GM12878 (cell line): ENCODE measurements at regions of chr16 and their contacts with region 1.

Region 1: GRCh38 chr16:76653390-76654026 is 376.3 kb downstream of the CNTNAP4 start:
- DNase-seq: peak; percentile 9
- ATAC-seq: peak; percentile 93
- H3K4me3 ChIP-seq: no peak overlapping the region
- H3K27ac ChIP-seq: no peak overlapping the region
- H3K4me1 ChIP-seq: no peaks in the 10 kb centered on the region
- H3K27me3 ChIP-seq: no peaks in the 10 kb centered on the region
- CTCF ChIP-seq: peak; percentile 53 to 78 (median 61); a peak in 5 of 6 replicates
- EP300 ChIP-seq: no peak
- POLR2A ChIP-seq: no peak
- RAD21 ChIP-seq: peak; percentile 82

Region 2: DNA sequence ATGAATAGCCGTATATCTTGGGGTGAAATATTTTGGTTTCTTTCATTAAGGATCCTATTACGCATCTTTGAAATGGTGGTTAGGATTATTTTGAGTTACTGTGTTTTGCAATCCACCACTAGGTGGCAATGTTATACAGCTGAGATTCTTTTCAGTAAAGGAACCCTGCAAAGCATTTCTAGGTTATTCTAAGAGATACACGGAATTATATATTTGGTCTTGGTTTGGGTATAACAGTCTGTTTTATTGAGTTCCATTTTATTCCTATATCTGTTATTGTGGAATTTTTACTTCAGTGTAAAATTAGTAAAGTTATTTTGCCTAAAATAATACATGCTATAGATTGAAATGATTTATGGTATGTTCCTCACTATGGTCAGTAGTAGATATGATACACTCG is 864.3 kb before region 1 on chr16:
- CTCF ChIA-PET with region 1: interaction called, 12 read pairs
- POLR2A ChIA-PET with region 1: no interaction called
- RAD21 ChIA-PET with region 1: interaction called, 4 read pairs
- SMC1A ChIA-PET with region 1: interaction called, 4 read pairs
- in situ Hi-C with region 1: loop called (anchors 5 kb)
- intact Hi-C with region 1: loop called (anchors 1 kb)
- DNase-seq: no peak
- ATAC-seq: peak; percentile 89
- H3K4me3 ChIP-seq: no peak overlapping the region
- H3K27ac ChIP-seq: no peak overlapping the region
- H3K4me1 ChIP-seq: 0 out of 2 replicates have a peak, but pooled peaks cover 3% of the 10 kb centered on the region
- H3K27me3 ChIP-seq: no peaks in the 10 kb centered on the region
- CTCF ChIP-seq: peak; percentile 60 to 74 (median 73)
- EP300 ChIP-seq: no peak
- POLR2A ChIP-seq: no peak
- RAD21 ChIP-seq: peak; percentile 90

Region 3: DNA sequence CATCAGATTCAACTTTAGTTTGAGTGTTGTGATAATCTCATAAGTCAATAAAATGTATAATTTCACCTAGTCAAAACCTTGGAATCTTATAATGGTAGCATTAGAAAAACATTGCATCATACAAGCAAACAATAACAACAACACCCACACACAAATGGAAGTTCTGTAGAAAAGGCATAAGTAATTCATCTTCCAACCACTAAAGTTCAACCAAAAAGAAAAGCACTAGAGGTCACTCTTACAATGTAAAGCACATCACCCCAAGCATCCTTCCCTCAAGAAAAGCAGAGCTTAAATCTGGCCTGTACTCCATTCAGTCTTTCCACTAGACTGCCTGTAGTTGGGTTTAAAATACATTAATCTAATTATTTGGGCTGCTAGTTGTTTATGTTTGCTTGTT is 374.5 kb before region 1 on chr16:
- CTCF ChIA-PET with region 1: interaction called, 17 read pairs
- POLR2A ChIA-PET with region 1: no interaction called
- RAD21 ChIA-PET with region 1: interaction called, 19 read pairs
- SMC1A ChIA-PET with region 1: interaction called, 7 read pairs
- in situ Hi-C with region 1: loop called (anchors 5 kb)
- intact Hi-C with region 1: loop called (anchors 1 kb)
- DNase-seq: no peak
- ATAC-seq: peak; percentile 77
- H3K4me3 ChIP-seq: no peak overlapping the region
- H3K27ac ChIP-seq: no peak overlapping the region
- H3K4me1 ChIP-seq: no peaks in the 10 kb centered on the region
- H3K27me3 ChIP-seq: no peaks in the 10 kb centered on the region
- CTCF ChIP-seq: peak; percentile 25 to 55 (median 31); a peak in 4 of 6 replicates
- EP300 ChIP-seq: no peak
- POLR2A ChIP-seq: no peak
- RAD21 ChIP-seq: peak; percentile 65

Region 4: DNA sequence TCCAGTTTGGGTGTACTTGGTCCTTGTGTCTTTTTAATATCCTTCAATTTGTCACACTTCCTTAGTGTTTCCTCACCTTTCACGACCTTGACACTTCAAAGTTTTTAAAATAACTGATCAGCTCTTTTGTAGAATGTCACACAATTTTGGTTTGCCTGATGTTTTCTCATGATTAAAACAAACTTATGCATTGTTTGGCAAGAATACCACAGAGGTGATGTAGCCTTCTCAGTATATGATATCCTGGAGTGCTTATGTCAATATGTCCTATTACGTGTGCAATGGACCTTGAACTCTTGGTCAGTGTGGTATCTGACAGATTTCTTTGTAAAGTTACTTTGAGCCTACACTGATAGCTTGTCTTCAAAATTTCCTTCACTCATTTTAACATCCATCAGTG is 78.9 kb before region 1 on chr16:
- CTCF ChIA-PET with region 1: no interaction called
- POLR2A ChIA-PET with region 1: no interaction called
- RAD21 ChIA-PET with region 1: no interaction called
- SMC1A ChIA-PET with region 1: interaction called, 4 read pairs
- in situ Hi-C with region 1: no loop called
- intact Hi-C with region 1: loop called (anchors 5 kb)
- DNase-seq: no peak
- ATAC-seq: peak; percentile 63
- H3K4me3 ChIP-seq: no peak overlapping the region
- H3K27ac ChIP-seq: no peak overlapping the region
- H3K4me1 ChIP-seq: peaks cover 3% of the 10 kb centered on the region; the same call in 1 of the 2 replicates
- H3K27me3 ChIP-seq: no peaks in the 10 kb centered on the region
- CTCF ChIP-seq: no peak
- EP300 ChIP-seq: peak in 1 of 2 experiments; percentile 50; a peak in 1 of 4 replicates
- POLR2A ChIP-seq: no peak
- RAD21 ChIP-seq: no peak

Region 5: DNA sequence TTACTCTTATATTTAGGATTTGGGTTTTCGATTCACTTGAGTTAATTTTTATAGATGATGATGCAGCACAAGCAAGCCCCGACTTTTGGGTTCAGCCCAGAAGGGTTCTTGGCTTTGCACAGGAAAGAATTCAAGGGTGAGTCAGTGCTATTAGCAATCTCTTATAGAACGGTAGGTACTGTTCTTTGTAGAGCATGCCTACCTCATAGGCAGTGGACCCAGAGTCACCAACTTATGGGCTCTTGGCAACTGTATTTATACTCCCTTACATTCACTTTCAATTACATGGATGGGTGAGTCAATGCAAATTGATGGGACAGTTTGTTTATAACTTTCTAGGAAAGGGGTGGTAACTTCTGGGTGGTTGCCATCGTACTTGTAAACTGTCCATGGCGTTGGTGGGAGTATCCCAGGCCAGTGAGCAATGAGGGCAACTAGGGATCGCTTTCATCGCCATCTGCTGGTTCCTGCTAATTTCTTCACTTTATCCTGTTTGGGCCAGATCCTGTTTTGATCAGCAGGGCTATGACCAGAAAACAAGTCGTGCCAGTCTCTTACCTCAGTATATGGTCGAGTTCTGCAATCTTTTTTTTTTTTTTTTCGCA is 13.7 kb before region 1 on chr16:
- CTCF ChIA-PET with region 1: interaction called, 10 read pairs
- POLR2A ChIA-PET with region 1: no interaction called
- RAD21 ChIA-PET with region 1: no interaction called
- SMC1A ChIA-PET with region 1: interaction called, 3 read pairs
- in situ Hi-C with region 1: no loop called
- intact Hi-C with region 1: no loop called
- DNase-seq: no peak
- ATAC-seq: peak; percentile 84
- H3K4me3 ChIP-seq: no peak overlapping the region
- H3K27ac ChIP-seq: no peak overlapping the region
- H3K4me1 ChIP-seq: no peaks in the 10 kb centered on the region
- H3K27me3 ChIP-seq: no peaks in the 10 kb centered on the region
- CTCF ChIP-seq: peak; percentile 26 to 36 (median 33); a peak in 4 of 6 replicates
- EP300 ChIP-seq: no peak
- POLR2A ChIP-seq: no peak
- RAD21 ChIP-seq: peak; percentile 33; the same call in 1 of the 2 replicates